Activated CD4-positive, alpha-beta memory T cell treated with anti-CD3 and anti-CD28 coated beads for 36 hours (primary cell): ENCODE measurements at regions of chr17 and their contacts with region 1.

Region 1: GRCh38 chr17:72605543-72605942 is 484.7 kb downstream of the SOX9 start:
- DNase-seq: no peak
- H3K4me3 Mint-ChIP-seq: no peak overlapping the region
- H3K27ac Mint-ChIP-seq: no peak overlapping the region
- H3K4me1 Mint-ChIP-seq: no peaks in the 10 kb centered on the region
- H3K27me3 Mint-ChIP-seq: peaks cover 16% of the 10 kb centered on the region

Region 2: GRCh38 chr17:72515291-72516065 is 90.1 kb before region 1 on chr17:
- CTCF ChIA-PET with region 1: no interaction called
- POLR2A ChIA-PET with region 1: no interaction called
- intact Hi-C with region 1: no loop called
- DNase-seq: no peak
- H3K4me3 Mint-ChIP-seq: no peak overlapping the region
- H3K27ac Mint-ChIP-seq: no peak overlapping the region
- H3K4me1 Mint-ChIP-seq: peaks cover under 1% of the 10 kb centered on the region
- H3K27me3 Mint-ChIP-seq: peaks cover 4% of the 10 kb centered on the region

Region 3: DNA sequence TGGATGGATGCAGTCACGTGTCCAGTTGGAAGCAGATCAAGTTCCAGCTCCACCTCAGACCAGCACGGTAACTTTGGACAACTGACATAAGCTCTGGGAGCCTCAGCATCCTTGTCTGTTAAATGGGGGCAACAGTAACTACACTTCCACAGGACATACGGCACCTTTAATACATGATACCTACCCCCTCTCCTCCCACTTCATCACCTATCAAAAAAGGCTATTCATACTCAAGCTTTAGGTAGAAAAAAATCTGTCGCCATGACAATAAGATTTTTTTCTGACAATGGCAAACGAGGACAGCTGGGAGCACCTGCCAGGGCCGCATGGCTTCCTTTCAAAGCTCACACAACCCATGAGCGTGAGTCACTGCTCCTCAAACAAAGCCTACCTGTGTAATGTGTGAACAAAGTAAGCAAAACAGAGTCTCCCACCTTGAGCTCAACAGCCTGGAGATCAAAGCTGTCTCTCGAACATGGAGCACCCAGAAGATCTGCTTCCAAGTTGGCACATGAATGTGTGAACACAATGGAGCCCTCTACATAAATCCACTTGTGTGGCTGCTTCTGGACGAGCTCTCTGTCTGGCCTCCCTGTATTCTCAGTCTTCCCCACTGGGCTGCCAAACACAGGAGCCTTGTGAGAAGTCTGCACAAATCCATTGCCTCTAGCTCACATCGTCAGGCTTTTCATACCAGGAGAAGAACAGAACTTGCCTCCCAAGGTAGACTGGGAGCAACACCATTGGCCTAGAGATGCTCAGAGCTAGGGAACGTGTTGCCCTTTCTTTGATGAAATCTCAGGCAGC is 25.0 kb before region 1 on chr17:
- CTCF ChIA-PET with region 1: no interaction called
- POLR2A ChIA-PET with region 1: no interaction called
- intact Hi-C with region 1: loop called (anchors 1 kb)
- DNase-seq: no peak
- H3K4me3 Mint-ChIP-seq: no peak overlapping the region
- H3K27ac Mint-ChIP-seq: no peak overlapping the region
- H3K4me1 Mint-ChIP-seq: no peaks in the 10 kb centered on the region
- H3K27me3 Mint-ChIP-seq: peaks cover 2% of the 10 kb centered on the region

Region 4: GRCh38 chr17:73166731-73167581 is 561.4 kb after region 1 on chr17:
- CTCF ChIA-PET with region 1: no interaction called
- POLR2A ChIA-PET with region 1: no interaction called
- intact Hi-C with region 1: no loop called
- DNase-seq: peak; percentile 31
- H3K4me3 Mint-ChIP-seq: peak overlapping the region; percentile 64
- H3K27ac Mint-ChIP-seq: no peak overlapping the region
- H3K4me1 Mint-ChIP-seq: peaks cover 30% of the 10 kb centered on the region
- H3K27me3 Mint-ChIP-seq: peaks cover 66% of the 10 kb centered on the region